ENCODE measurements at regions of chr15 and their contacts with region 1.

Region 1: DNA sequence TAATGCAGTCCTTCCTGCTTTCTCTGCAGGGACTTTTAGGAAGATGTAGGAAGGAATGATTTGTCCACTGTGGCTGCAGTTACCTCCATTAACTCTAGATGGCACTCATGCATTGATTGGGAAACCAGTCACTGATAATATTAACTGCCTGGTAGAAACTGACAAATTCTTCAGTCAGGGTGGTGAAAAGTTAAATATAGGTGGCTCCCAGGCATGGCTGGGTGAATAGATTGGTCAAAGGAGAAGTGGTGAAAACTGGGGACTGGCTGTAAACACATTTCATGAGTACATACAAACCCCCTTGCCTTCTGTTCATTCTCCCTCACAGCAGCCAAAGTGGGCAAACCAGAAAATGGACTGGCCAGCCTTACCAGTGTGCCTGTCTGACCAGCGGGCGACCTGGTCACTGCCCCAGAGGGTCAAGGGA is 333.4 kb downstream of the THSD4 start:
- DNase-seq: peak in 27 of 42 donors; percentile 13 to 80 (median 55)

Region 2: DNA sequence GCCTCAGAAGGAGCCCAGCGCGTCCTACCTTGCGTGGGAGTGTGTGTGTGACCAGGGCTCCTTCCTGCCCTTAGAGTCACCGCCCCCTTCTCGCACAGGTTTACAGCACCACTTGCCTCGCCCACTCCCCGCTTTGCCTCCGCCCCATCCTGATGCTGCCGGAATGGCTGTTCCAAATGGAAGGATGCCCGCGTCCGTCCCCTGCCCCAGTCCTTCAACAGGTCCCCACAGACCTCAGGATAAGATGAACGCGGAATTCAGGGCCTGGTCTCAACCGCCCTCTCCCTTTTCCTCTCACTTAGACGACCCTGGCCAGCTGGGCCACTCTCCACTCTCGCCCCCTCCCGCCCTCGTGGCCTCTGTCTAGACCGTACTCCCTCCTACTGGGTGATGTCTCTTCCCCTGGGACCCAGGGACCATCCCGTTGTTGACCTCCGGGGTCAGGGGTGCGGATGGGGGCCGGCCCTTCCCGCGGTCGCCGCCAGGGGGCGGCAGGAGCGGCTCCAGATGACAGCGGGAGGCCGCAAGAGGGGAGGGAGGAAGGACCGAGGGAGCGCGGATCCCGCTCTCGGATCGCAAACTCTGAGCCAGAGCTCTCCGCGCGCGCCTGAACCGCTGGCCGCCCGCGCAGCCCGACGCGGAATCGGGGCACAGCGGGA is 333.7 kb before region 1 on chr15 and contains the start of gene THSD4:
- intact Hi-C with region 1: loop called (anchors 10 kb)
- DNase-seq: peak in 37 of 42 donors; percentile 9 to 79 (median 47)

Region 3: GRCh38 chr15:71651750-71652186 is 203.1 kb after region 1 on chr15:
- intact Hi-C with region 1: loop called (anchors 5 kb)
- DNase-seq: peak in 25 of 42 donors; percentile 10 to 77 (median 41)

Region 4: DNA sequence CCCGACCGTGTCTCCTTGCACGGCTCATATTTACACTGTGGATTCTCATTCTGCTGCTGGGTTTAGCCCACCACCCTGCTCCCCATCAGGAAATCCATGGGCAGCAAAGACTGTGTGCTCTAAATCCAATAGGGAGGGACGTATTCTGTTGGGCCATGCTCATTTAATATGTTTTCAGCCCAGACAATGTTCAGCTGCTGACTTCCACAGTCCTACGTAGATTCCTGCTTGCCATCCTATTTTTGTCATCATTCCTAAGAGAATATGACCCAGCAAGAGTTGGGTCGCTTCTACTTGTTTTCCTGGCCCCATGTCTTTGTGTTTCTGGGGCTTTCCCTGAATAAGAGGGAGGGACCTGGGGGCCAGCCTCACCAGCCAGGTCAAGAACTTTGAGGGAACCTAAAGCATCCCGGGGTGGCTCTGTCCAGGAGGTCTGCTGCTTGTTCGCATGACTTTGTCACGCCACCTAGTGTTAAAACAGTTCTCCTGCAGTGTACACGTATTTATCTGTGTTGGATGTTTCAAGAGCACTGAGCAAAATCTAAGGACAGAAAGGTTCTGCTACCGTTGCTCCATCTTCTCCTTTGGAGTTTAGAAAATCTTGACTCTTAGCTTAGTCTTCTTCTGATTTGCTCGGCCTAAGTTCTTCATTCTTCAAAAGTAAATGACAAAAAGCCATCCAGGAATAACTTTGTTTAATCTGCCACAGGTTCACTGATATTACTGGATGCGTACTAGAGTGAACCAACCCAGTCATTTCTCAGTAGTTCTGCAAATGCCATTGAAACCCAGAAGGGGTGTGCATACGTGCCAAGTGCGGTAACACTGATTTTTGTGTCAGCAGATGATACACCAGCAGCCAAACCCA is 281.8 kb after region 1 on chr15:
- intact Hi-C with region 1: loop called (anchors 10 kb)
- DNase-seq: peak in 31 of 42 donors; percentile 9 to 77 (median 45)

Region 5: GRCh38 chr15:72155635-72156616 is 707.2 kb after region 1 on chr15:
- intact Hi-C with region 1: loop called (anchors 10 kb)
- DNase-seq: peak; percentile 76 to 96 (median 92)

Measured in head of caudate nucleus (tissue), 42 donors.